ENCODE measurements at regions of chr16 and their contacts with region 1.

Region 1: GRCh38 chr16:25014500-25015147 is 545 bp downstream of the ARHGAP17 start:
- DNase-seq: no peak
- ATAC-seq: peak; percentile 58
- H3K4me3 ChIP-seq: peak overlapping the region; percentile 75 to 87
- H3K27ac ChIP-seq: peak overlapping the region; percentile 83
- H3K4me1 ChIP-seq: peaks cover 31% of the 10 kb centered on the region
- H3K27me3 ChIP-seq: no peaks in the 10 kb centered on the region
- CTCF ChIP-seq: no peak

Region 2: GRCh38 chr16:24993722-24994686 is 20.6 kb before region 1 on chr16:
- CTCF ChIA-PET with region 1: interaction called, 7 read pairs
- POLR2A ChIA-PET with region 1: interaction called, 11 read pairs
- in situ Hi-C with region 1: no loop called
- intact Hi-C with region 1: no loop called
- DNase-seq: peak; percentile 85
- ATAC-seq: peak; percentile 90
- H3K4me3 ChIP-seq: peak overlapping the region in 1 of 2 experiments; percentile 31; a peak in 2 of 4 replicates
- H3K27ac ChIP-seq: peak overlapping the region; percentile 92
- H3K4me1 ChIP-seq: peaks cover 87% of the 10 kb centered on the region
- H3K27me3 ChIP-seq: no peaks in the 10 kb centered on the region
- CTCF ChIP-seq: no peak